BJ (cell line): ENCODE measurements at regions of chr14 and their contacts with region 1.

Region 1: GRCh38 chr14:92693998-92694795 is 54.2 kb downstream of the LGMN start:
- DNase-seq: no peak
- H3K4me3 ChIP-seq: no peak overlapping the region
- H3K27me3 ChIP-seq: no peaks in the 10 kb centered on the region; the same call in 1 of the 2 replicates
- CTCF ChIP-seq: no peak

Region 2: GRCh38 chr14:92215579-92215978 is 478.6 kb before region 1 on chr14:
- CTCF ChIA-PET with region 1: no interaction called
- POLR2A ChIA-PET with region 1: interaction called, 11 read pairs
- DNase-seq: no peak
- H3K4me3 ChIP-seq: no peak overlapping the region
- H3K27me3 ChIP-seq: peaks cover 2% of the 10 kb centered on the region; the same call in 1 of the 2 replicates
- CTCF ChIP-seq: no peak